Stomach (tissue), 19 donors: ENCODE measurements at regions of chr3 and their contacts with region 1.

Region 1: DNA sequence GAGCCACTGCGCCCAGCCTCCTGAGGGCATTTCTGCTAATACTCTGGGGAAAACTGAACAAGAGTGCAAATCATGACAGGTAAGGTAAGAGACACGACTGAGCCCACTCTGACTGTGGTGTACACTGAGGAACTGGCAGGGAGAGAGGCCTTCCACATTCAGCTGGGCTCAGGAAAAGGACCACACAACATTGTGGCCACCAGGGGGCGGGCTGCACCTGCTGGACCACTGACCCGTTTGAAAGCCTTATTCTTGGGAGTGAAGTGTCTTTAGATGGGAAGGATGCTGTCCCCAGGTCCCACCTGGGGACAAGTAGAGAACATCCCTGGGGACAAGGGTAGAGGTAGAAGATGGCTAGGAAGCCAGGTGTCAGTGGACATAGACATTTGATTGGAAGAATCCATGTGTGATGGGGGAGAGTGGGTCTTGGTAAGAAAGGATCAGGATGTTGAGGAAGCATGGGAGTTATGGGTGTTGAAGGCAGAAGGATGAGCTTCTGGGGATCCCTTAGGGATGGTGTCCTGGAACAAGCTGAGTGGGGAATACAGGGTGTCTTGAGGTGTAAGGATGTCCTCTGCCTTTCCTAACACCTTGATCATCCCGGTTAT is 6.2 kb upstream of the CTDSPL start:
- DNase-seq: peak; percentile 92 to 93
- H3K4me3 ChIP-seq: no peak overlapping the region
- H3K27ac ChIP-seq: peak overlapping the region in 2 of 5 donors; percentile 42 to 58
- H3K4me1 ChIP-seq: peaks cover 5 to 34% (median 30%) of the 10 kb centered on the region in 4 donors
- H3K27me3 ChIP-seq: no peaks in the 10 kb centered on the region
- CTCF ChIP-seq: peak in 6 of 7 experiments; percentile 76 to 97 (median 92)
- EP300 ChIP-seq: no peak
- POLR2A ChIP-seq: no peak

Region 2: DNA sequence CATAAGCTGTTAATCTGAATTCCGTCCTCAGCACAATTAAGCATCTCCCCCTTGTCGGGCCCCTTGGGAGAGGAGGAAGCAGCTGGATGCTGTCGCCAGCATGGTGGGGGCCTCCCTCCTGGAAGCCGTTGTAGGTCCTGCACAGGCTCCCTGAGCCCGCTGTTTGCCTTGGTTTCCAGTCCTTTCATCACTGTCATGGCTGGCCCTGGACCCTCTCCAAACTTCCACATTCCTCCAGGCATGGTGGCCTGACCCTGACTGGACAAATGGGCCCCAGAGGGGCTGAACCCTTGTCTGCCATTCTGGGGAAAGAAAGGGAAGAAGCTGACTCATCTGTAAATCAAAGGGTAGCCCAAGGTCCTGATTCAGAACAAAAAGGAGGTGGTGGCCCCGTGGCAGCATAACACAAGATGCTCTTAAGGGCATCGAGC is 380.6 kb before region 1 on chr3:
- intact Hi-C with region 1: no loop called
- DNase-seq: peak in 1 of 2 donors; percentile 31
- H3K4me3 ChIP-seq: no peak overlapping the region
- H3K27ac ChIP-seq: no peak overlapping the region
- H3K4me1 ChIP-seq: peaks cover 0 to 22% (median 6%) of the 10 kb centered on the region in 4 donors
- H3K27me3 ChIP-seq: no peaks in the 10 kb centered on the region
- CTCF ChIP-seq: no peak
- EP300 ChIP-seq: no peak
- POLR2A ChIP-seq: no peak

Region 3: DNA sequence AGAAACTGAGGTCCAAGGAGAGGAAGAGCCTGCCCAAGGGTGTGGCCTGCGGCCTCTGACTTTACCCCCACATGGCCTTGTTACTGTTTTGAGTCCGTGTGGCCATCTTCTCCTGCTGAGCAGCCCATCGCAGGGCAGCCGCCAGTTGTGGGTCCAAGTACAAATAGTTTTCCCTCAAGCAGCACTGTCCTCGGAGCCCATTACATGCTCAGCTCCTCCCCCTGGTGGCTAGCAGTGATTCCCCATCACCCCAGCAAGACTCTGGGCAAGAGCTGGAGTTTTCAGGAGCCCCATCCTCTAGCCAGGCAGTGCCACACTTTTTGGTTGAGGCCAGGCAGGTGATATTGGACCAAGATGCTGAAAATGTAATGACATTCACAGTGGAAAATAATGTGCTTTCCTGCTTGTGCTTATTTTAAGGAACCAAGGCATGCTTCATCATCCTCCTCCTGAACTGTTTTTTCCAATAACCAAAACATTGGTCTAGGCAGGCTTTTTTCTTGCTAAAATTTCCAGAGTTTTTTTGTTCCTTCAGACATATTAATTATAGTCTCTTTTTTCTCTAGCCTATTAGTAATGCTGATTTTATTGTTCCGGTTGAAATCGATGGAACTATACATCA is 111.9 kb after region 1 on chr3:
- intact Hi-C with region 1: loop called (anchors 10 kb)
- DNase-seq: peak; percentile 77 to 88
- H3K4me3 ChIP-seq: no peak overlapping the region
- H3K27ac ChIP-seq: peak overlapping the region in 1 of 5 donors; percentile 56
- H3K4me1 ChIP-seq: peaks cover 31 to 69% (median 53%) of the 10 kb centered on the region in 4 donors
- H3K27me3 ChIP-seq: no peaks in the 10 kb centered on the region
- CTCF ChIP-seq: peak in 5 of 7 experiments; percentile 64 to 86 (median 79)
- EP300 ChIP-seq: no peak
- POLR2A ChIP-seq: no peak

Region 4: DNA sequence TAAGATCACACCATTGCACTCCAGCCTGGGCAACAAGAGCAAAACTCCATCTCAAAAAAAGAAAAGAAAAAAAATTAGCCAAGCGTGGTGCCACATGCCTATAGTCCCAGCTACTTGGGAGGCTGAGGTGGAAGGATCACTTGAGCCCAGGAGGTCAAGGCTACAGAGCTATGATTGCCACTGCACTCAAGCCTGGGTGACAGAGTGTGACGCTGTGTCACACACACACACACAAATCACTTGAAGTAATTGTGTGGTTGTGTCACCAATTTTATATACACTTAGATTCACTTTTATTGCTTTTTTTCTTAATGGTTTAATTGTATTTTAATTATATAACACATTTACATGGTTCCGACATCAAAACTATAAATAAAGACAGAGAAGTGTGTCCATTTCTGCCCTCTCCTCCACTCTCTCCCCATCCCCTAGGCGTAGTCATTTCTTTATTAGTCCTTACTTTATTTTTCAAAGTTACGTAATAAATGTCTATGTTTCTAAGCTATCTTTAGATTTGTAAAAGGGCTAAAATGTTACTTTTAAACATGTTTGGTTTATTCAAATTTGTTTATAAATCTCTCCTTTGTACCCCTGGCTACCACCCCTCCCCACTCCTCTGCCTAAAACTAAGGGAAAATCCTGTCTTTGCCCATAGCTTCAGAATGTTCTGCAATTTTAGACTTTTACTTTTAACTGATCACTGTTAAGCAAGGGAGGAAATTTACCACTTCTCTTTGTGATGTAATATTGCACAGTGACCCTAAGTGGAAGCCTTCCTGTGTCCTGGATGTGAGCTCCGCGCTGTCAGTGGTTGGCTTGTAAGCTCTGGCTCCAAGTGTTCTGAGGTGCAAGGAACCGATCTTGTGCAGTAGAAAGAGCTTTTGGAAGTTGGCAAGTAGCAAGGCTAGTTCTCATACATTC is 124.3 kb after region 1 on chr3:
- intact Hi-C with region 1: no loop called
- DNase-seq: no peak
- H3K4me3 ChIP-seq: no peak overlapping the region
- H3K27ac ChIP-seq: peak overlapping the region in 1 of 5 donors; percentile 21
- H3K4me1 ChIP-seq: peaks cover 0 to 7% (median 2%) of the 10 kb centered on the region in 4 donors
- H3K27me3 ChIP-seq: no peaks in the 10 kb centered on the region
- CTCF ChIP-seq: no peak
- EP300 ChIP-seq: no peak
- POLR2A ChIP-seq: no peak